CD8-positive, alpha-beta T cell (primary cell): ENCODE measurements at regions of chr14 and their contacts with region 1.

Region 1: GRCh38 chr14:92670160-92670559 is 78.3 kb downstream of the LGMN start:
- DNase-seq: no peak
- ATAC-seq: no peak
- H3K4me3 ChIP-seq: no peak overlapping the region
- H3K4me3 Mint-ChIP-seq: no peak overlapping the region
- H3K27ac ChIP-seq: peak overlapping the region in 1 of 2 experiments; percentile 22
- H3K27ac Mint-ChIP-seq: peak overlapping the region; percentile 86
- H3K4me1 ChIP-seq: peaks cover 78% of the 10 kb centered on the region
- H3K4me1 Mint-ChIP-seq: peaks cover 78% of the 10 kb centered on the region
- H3K27me3 ChIP-seq: no peaks in the 10 kb centered on the region
- H3K27me3 Mint-ChIP-seq: no peaks in the 10 kb centered on the region
- CTCF ChIP-seq: no peak

Region 2: DNA sequence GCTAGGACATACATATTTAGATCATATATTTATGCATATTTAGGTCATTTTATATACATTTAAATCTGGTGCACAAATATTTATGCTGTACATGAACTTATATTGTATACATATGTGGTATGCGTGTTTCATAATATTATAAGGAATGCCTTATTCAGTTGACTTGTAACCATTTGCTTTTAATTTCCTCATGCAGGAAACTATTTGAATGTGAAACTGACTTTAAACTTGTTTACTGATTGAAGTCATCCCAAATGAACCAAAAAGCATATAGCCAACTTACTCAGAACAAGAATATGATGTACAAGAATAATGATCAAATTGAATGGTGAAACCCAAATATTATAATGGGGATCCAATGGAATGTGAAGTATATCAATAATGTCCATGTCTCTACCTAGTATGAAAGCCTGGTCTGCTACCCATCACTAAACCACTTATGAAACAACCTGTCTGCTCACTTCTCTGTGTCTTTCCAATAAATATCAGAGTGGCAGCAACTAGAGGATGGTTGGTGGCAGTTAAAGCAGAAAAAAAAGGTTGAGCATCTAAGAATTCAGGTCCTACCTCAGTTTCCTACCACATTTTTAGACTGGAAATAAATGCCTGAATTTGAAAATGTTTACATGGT is 1648.1 kb before region 1 on chr14:
- CTCF ChIA-PET with region 1: no interaction called
- POLR2A ChIA-PET with region 1: no interaction called
- intact Hi-C with region 1: no loop called
- DNase-seq: no peak
- ATAC-seq: peak; percentile 36
- H3K4me3 ChIP-seq: peak overlapping the region; percentile 29 to 51
- H3K4me3 Mint-ChIP-seq: peak overlapping the region; percentile 80
- H3K27ac ChIP-seq: peak overlapping the region; percentile 56 to 84
- H3K27ac Mint-ChIP-seq: peak overlapping the region; percentile 89
- H3K4me1 ChIP-seq: peaks cover 9% of the 10 kb centered on the region
- H3K4me1 Mint-ChIP-seq: peaks cover 30% of the 10 kb centered on the region
- H3K27me3 ChIP-seq: no peaks in the 10 kb centered on the region
- H3K27me3 Mint-ChIP-seq: no peaks in the 10 kb centered on the region
- CTCF ChIP-seq: no peak

Region 3: GRCh38 chr14:92651106-92651757 is 18.9 kb before region 1 on chr14:
- CTCF ChIA-PET with region 1: no interaction called
- POLR2A ChIA-PET with region 1: interaction called, 14 read pairs
- intact Hi-C with region 1: loop called in 1 of 2 experiments (anchors 1 kb)
- DNase-seq: peak; percentile 56 to 96 (median 84)
- ATAC-seq: peak; percentile 82
- H3K4me3 ChIP-seq: peak overlapping the region; percentile 77 to 91
- H3K4me3 Mint-ChIP-seq: peak overlapping the region; percentile 98
- H3K27ac ChIP-seq: peak overlapping the region; percentile 77 to 95
- H3K27ac Mint-ChIP-seq: peak overlapping the region; percentile 100
- H3K4me1 ChIP-seq: peaks cover 61% of the 10 kb centered on the region
- H3K4me1 Mint-ChIP-seq: peaks cover 76% of the 10 kb centered on the region
- H3K27me3 ChIP-seq: no peaks in the 10 kb centered on the region
- H3K27me3 Mint-ChIP-seq: no peaks in the 10 kb centered on the region
- CTCF ChIP-seq: no peak